SK-N-SH (cell line): ENCODE measurements at regions of chr19 and their contacts with region 1.

Region 1: DNA sequence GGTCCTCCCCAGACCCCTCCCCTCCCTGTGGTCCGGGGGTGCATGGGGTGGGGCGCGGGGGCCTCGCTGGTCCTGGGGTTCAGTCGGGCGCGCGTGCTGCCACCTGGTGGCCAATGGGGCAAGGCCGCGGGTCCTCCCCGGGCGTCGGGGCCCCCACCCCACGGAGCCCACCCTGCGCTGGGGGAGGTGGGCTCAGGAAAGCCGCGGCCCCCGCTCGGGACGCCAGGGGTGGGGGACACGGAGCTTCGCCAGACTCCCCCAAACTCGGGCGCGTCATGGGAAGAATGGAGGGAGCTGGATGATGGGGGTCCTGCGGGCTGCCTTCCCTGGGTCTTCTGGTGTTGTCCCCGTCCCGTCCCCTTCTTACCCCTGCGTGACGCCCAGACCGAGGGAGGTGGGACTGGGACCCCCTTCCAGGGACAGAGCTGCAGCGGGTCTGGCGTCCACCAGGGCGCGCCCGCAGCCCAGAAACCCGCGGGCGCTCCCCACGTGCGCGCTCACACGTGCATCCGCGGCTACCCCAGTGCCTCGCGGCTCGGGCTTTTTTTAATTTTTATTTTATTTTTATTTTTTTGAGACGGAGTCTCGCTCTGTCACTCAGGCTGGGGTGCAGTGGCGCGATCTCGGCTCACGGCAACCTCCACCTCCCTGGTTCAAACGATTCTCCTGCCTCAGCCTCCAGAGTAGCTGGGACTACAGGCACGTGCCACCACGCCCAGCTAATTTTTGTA is 19.8 kb upstream of the TCF3 start:
- DNase-seq: peak; percentile 86
- H3K4me3 ChIP-seq: peak overlapping the region in 1 of 2 experiments; percentile 48; a peak in 1 of 4 replicates
- H3K27ac ChIP-seq: no peak overlapping the region
- H3K4me1 ChIP-seq: peaks cover 0 to 5% of the 10 kb centered on the region in 2 experiments; a peak in 2 of 4 replicates
- H3K27me3 ChIP-seq: peaks cover 59% of the 10 kb centered on the region
- CTCF ChIP-seq: peak; percentile 92
- EP300 ChIP-seq: no peak
- RAD21 ChIP-seq: peak; percentile 74

Region 2: DNA sequence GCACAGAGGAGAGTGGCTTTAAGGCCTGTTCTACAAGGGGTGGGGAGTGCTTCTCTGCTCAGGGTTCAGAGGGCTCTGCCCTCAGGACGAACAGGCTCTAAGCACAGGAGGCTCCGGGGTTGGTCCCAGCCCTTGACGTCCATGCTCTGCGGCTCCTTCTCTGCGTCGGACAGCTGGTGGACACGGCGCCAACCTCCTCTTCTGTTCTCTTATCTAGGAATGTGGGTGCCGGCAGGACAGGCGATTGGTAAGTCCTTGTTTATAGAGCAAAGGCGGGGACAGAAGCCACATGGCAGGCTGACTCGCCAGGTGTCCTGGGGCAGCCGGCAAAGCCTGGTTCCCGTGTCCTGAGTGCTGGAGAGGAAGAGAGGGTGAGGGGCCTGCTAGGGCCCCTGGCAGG is 242.5 kb before region 1 on chr19:
- CTCF ChIA-PET with region 1: no interaction called
- POLR2A ChIA-PET with region 1: no interaction called
- DNase-seq: no peak
- H3K4me3 ChIP-seq: no peak overlapping the region
- H3K27ac ChIP-seq: no peak overlapping the region
- H3K4me1 ChIP-seq: no peaks in the 10 kb centered on the region; a peak in 1 of 4 replicates
- H3K27me3 ChIP-seq: no peaks in the 10 kb centered on the region
- CTCF ChIP-seq: no peak
- EP300 ChIP-seq: no peak
- RAD21 ChIP-seq: no peak

Region 3: DNA sequence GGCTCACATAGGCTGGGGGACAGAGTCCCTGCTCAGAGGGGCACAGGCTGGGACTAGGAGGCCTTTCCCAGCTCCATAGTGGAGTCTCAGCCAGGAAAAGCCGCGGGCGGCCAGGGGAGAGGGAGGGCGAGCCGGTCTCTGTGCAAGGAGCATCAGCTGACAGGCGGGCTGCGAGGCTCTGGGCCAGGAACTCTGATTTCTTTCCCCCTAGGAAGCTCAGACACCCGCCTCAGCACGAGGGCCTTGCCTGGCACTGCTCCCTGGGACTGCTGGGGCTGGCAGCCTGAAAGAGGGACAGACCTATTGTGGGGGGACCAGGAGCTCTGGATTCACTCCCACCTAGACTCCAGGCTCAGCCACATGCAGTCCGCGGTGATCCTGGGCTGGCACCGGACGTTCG is 150.6 kb before region 1 on chr19:
- CTCF ChIA-PET with region 1: no interaction called
- POLR2A ChIA-PET with region 1: no interaction called
- DNase-seq: no peak
- H3K4me3 ChIP-seq: no peak overlapping the region
- H3K27ac ChIP-seq: no peak overlapping the region
- H3K4me1 ChIP-seq: no peaks in the 10 kb centered on the region
- H3K27me3 ChIP-seq: peaks cover 38% of the 10 kb centered on the region
- CTCF ChIP-seq: no peak
- EP300 ChIP-seq: no peak
- RAD21 ChIP-seq: no peak

Region 4: DNA sequence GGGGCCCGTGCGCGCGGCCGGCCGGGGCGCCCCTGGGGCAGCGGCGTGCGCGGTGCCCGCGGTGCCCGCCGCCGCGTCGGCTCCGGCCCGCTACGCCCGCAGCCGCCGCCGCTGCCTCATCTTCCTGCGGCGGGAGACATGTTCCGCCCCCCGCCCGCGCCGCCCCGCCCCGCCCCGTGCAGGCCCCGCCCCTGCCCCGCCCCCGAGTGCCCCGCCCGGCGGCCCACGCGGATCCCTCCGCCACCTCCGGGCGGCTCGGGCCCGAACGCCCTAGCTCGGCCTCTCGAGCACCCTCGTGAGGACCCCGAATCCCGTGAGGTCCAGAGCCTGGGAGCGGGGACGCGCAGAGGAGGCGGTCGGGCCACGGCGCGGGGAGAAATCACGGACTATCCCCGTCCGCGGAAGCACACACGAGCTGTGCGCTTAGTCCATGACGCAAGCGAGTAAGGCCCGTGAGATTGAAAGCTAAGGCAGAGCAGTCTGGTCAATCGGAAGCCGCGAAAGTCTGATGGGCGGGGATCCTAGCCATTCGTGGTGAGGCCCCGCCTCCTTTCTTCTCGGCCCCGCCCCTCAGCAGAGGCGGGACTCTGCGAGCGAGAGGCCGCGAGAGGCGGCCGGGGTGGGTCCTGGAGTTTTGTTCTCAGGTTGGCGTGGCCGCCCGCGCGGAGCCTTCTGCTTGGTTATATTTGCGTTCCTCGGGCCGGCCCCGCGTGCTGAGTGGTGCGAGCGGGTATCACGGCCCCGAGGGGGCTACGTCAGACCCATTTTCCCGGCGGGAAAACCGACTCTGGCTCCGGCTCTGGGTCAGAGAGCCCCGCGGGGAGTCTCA is 19.5 kb before region 1 on chr19 and contains the start of gene TCF3:
- CTCF ChIA-PET with region 1: interaction called, 13 read pairs
- POLR2A ChIA-PET with region 1: no interaction called
- DNase-seq: peak; percentile 98
- H3K4me3 ChIP-seq: peak within 1 kb of the TSS; percentile 83 to 91
- H3K27ac ChIP-seq: peak within 1 kb of the TSS; percentile 94 to 99
- H3K4me1 ChIP-seq: peaks cover 0 to 9% of the 10 kb centered on the region in 2 experiments; a peak in 2 of 4 replicates
- H3K27me3 ChIP-seq: no peaks in the 10 kb centered on the region
- CTCF ChIP-seq: no peak
- EP300 ChIP-seq: no peak
- RAD21 ChIP-seq: no peak
- polyA plus RNA-seq, gene TCF3: 81.3 and 104 TPM in 2 replicates

Region 5: DNA sequence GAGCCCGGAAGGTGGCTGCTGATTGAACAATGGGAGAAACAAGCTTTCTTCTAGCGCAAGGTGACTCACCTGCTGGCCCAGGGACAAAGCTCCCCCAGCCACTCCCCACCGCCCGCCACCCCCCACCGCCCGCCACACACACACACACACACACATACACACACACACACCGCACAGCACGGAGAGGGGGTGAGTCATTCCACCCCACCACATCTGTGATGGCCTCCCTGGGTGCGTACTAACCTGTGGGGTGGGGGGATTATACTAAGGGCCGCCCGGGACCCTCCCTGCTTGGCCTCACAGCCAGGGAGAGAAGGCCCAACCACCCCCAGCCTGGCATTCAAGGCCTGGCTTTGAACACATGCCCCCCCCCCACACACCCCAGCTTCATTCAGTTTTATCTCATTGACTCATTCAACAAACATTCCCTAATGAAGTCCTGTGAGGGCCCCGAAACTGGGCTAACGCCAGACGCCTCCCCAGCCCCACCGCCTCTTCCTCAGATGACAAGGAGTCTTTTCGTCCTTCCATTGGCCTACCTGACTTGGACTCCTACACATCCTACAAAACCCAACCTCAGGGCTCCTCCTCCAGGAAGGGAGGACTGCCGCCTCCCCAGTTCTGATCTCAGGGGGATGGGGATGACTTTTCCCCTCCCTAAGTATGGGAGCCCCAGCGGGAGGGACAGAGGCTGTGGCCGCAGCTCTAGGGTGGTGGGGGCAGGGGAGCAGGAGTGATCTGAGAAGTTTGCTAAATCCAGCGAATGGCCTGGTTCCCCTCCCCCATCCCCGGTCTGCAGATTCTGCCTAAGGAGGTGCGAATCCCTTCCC is 75.3 kb after region 1 on chr19:
- CTCF ChIA-PET with region 1: interaction called, 12 read pairs
- POLR2A ChIA-PET with region 1: no interaction called
- DNase-seq: no peak
- H3K4me3 ChIP-seq: no peak overlapping the region
- H3K27ac ChIP-seq: no peak overlapping the region
- H3K4me1 ChIP-seq: no peaks in the 10 kb centered on the region
- H3K27me3 ChIP-seq: peaks cover 77% of the 10 kb centered on the region
- CTCF ChIP-seq: no peak
- EP300 ChIP-seq: no peak
- RAD21 ChIP-seq: no peak

Region 6: DNA sequence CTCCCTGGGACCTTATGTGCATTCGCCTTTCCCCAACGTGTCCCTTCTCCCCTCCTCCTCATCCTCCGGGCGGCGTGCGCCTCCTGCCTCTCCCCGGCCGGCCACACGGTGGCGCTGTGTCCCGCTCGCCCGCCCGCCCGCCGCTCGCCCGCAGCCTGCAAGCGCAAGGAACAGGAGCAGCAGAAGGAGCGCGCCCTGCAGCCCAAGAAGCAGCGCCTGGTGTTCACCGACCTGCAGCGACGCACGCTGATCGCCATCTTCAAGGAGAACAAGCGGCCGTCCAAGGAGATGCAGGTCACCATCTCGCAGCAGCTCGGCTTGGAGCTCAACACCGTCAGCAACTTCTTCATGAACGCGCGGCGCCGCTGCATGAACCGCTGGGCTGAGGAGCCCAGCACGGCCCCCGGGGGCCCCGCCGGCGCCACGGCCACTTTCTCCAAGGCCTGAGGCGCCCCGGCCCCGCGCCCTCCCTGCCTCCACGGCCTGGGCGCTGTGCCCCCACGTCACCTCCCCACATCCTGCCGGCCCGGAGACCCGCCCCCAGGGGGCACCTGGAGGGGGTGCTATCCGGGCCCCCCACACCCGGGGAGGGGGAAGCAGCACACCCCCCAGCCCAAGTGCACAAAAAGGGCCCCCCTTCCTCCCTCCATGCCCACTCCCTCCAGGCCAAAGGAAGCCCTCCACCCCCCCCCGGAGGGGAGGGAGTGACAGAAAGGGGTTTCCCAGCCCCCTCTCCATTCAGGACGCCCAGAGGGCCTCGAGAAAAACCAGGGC is 103.0 kb after region 1 on chr19:
- CTCF ChIA-PET with region 1: interaction called, 22 read pairs
- POLR2A ChIA-PET with region 1: no interaction called
- DNase-seq: peak; percentile 72
- H3K4me3 ChIP-seq: no peak overlapping the region; a peak in 1 of 4 replicates
- H3K27ac ChIP-seq: no peak overlapping the region
- H3K4me1 ChIP-seq: no peaks in the 10 kb centered on the region
- H3K27me3 ChIP-seq: peaks cover 73% of the 10 kb centered on the region
- CTCF ChIP-seq: peak; percentile 50
- EP300 ChIP-seq: no peak
- RAD21 ChIP-seq: no peak

Region 7: DNA sequence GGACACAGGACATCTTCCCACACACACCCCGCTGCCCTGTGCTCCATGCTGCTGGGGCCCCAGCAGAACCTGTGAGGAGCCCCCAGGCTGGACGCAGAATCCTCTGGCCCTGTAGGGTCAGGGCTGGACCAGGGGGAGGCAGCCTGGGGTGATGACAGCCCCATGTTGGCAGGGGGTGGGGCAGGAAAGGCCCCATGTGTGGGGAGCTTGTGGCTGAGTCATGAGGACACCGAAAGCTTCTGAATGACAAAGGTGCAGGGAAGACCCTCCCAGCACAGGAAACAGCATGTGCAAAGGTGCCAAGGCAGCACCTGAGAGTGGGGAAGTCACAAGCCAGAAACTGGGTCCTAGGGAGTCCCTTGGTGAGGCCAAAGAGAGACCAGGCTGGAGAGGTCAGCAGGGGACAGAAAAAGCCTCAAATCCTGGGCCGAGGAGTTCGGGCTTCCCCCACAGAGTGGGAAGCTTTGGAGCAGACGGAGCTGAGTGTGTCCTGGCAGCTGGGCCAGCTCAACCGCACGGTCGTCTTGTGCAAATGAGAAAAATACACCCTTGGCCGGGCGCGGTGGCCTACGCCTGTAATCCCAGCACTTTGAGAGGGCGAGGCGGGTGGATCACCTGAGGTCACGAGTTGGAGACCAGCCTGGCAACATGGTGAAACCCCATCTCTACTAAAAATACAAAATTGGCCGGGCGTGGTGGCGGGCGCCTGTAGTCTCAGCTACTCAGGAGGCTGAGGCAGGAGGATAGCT is 122.4 kb after region 1 on chr19:
- CTCF ChIA-PET with region 1: interaction called, 46 read pairs
- POLR2A ChIA-PET with region 1: interaction called, 3 read pairs
- DNase-seq: no peak
- H3K4me3 ChIP-seq: no peak overlapping the region
- H3K27ac ChIP-seq: no peak overlapping the region
- H3K4me1 ChIP-seq: peaks cover 0 to 8% of the 10 kb centered on the region in 2 experiments; a peak in 1 of 4 replicates
- H3K27me3 ChIP-seq: no peaks in the 10 kb centered on the region
- CTCF ChIP-seq: no peak
- EP300 ChIP-seq: no peak
- RAD21 ChIP-seq: no peak